Caco-2 (cell line): ENCODE measurements at regions of chr6 and their contacts with region 1.

Region 1: GRCh38 chr6:16471222-16471909 is 233.0 kb downstream of the GMPR start:
- DNase-seq: peak in 1 of 2 experiments; percentile 10
- H3K4me3 ChIP-seq: no peak overlapping the region
- H3K4me3 Mint-ChIP-seq: peak overlapping the region; percentile 13
- H3K27ac Mint-ChIP-seq: peak overlapping the region; percentile 61
- H3K4me1 ChIP-seq: peaks cover 40% of the 10 kb centered on the region
- H3K4me1 Mint-ChIP-seq: peaks cover 34% of the 10 kb centered on the region
- H3K27me3 ChIP-seq: no peaks in the 10 kb centered on the region
- H3K27me3 Mint-ChIP-seq: no peaks in the 10 kb centered on the region
- CTCF ChIP-seq: no peak

Region 2: DNA sequence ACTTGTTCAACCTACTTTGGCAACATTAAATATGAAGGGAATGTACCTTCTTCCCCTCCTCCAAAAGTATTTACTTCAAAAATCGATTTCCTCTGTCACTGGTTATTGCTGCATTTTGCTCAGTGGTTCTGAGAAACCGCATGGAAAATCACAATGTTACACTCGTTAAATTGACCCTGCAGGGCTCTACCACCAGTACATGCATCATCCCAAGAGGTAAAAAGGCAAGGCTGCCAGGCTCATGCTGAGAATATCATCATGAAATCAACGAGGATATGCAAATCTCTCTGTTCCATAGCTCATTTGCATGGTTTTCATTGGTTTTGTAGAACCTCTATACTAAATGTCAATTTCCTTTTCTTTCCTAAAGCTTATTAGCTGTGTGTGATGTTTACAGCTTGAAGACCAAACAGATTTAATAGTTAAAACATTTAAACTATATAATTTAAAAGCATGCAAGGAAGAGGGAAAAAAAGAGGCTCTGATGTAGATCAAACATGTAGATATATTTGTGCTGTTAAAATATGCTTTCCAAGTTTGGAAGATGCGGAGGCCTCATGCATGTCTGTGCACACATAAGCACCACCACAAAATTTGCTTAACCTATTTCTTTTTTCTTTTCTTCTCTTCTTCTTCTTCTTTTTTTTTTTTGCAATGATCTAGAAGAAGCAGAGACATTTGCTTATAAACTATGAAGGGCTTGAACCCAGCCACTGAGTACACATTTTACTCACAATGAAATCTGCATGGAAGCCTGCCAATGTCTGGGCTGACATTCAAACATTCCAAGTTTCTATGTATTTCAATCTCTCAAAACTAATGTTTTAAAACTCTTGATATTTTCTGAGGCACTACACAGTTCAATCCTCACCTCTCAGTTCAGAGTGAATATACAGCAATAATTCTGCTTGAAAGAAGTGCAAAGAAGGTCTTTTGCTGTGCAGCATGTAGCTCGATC is 39.0 kb before region 1 on chr6:
- CTCF ChIA-PET with region 1: no interaction called
- POLR2A ChIA-PET with region 1: no interaction called
- intact Hi-C with region 1: loop called (anchors 5 kb)
- DNase-seq: no peak
- H3K4me3 ChIP-seq: no peak overlapping the region
- H3K4me3 Mint-ChIP-seq: no peak overlapping the region
- H3K27ac Mint-ChIP-seq: no peak overlapping the region
- H3K4me1 ChIP-seq: peaks cover 14% of the 10 kb centered on the region
- H3K4me1 Mint-ChIP-seq: peaks cover 22% of the 10 kb centered on the region
- H3K27me3 ChIP-seq: no peaks in the 10 kb centered on the region
- H3K27me3 Mint-ChIP-seq: no peaks in the 10 kb centered on the region
- CTCF ChIP-seq: no peak